Naive thymus-derived CD4-positive, alpha-beta T cell (primary cell): ENCODE measurements at regions of chr16 and their contacts with region 1.

Region 1: DNA sequence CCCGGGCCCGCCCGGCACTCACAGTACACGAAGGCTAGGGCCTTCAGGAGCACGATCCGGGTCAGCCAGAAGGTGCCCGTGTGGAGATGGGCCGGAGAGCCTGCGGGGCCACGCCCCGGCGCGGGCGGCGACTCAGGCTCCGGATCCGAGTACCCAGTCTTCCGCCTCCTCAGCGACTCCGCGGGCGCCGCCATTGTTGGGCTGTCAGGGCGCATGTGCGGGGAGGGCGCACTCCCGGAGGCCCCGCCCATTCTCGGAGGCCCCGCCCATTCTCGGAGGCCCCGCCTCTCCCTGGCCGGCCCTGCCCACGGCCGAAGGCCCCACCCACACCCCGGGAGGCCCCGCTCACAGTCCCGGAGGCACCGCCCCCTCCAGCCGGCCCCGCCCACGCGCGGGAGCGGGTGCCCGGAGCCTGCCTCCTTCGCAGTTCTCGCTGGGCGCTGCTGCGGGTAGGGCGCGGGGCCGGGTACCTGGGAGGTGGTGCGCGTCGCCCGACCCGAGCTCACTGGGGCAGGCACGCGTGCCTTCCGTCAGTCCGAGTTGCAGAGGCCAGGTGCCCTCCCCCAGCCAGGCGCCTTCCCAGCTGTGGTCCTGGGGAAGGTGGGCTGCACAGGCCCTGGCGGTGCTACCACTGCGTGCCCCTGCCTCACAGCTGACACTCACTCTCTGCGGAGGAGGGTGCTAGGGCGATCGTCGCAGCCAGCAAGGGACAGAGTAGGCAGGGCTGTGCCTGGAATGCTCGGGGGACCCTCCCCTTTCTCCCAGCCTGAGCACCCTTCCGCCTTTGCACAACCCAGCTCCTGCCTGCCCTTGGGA is at the start of gene LMF1:
- DNase-seq: peak; percentile 92 to 100 (median 96)
- ATAC-seq: peak; percentile 100
- H3K4me3 ChIP-seq: peak within 1 kb of the TSS; percentile 79
- H3K4me3 Mint-ChIP-seq: peak within 1 kb of the TSS; percentile 67 to 88 (median 76)
- H3K27ac ChIP-seq: peak within 1 kb of the TSS; percentile 82
- H3K27ac Mint-ChIP-seq: peak within 1 kb of the TSS in 8 of 9 donors; percentile 58 to 90 (median 78)
- H3K4me1 ChIP-seq: peaks cover 6 to 19% of the 10 kb centered on the region in 2 donors
- H3K4me1 Mint-ChIP-seq: peaks cover 12 to 40% (median 29%) of the 10 kb centered on the region in 7 donors
- H3K27me3 ChIP-seq: no peaks in the 10 kb centered on the region
- H3K27me3 Mint-ChIP-seq: peaks cover 0 to 7% (median 0%) of the 10 kb centered on the region in 5 donors
- total RNA-seq, gene LMF1: 25.9 to 63.1 (median 43.1) TPM

Region 2: DNA sequence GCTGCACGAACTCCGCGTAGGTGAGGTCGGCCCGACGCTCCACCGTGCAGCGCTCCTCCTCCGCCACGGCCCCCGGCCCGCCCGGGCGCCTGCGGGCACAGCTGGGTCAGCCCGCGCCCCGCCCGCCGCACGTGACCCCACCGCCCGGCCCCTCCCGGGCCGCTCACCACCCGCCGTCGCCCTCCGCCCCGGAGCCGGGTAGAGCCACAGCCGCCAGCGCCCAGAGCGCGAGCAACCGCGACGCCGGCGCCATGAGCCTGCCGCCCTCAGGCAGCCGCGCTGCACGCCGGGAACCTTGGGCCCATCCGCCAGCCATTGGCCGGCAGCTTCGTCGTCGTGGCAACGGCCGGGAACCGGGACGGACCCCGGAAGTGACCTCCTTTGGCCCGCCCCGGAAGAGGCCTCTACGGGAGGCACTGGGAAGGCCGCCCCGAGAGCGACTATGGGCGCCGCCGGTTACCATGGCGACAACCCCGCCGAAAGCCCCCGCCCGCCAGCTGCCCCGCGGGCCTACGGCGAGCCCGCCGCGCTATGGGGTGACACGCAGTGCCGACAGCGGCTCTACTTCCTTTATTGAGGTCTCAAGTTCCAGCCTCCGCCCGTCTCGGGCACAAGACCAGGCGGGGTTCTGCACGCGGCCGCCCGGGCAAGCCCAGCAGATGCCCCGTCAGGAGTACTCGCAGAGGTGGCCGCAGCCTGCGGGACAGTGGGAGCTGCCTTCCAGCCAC is 286.7 kb before region 1 on chr16 and contains the start of gene JMJD8:
- CTCF ChIA-PET with region 1: no interaction called
- POLR2A ChIA-PET with region 1: no interaction called
- intact Hi-C with region 1: loop called in 1 of 2 experiments (anchors 2 kb)
- DNase-seq: peak; percentile 88 to 97 (median 91)
- ATAC-seq: peak; percentile 75
- H3K4me3 ChIP-seq: peak within 1 kb of the TSS; percentile 52
- H3K4me3 Mint-ChIP-seq: peak within 1 kb of the TSS; percentile 58 to 87 (median 76)
- H3K27ac ChIP-seq: peak within 1 kb of the TSS; percentile 78
- H3K27ac Mint-ChIP-seq: peak within 1 kb of the TSS in 6 of 9 donors; percentile 38 to 82 (median 58)
- H3K4me1 ChIP-seq: peaks cover 9 to 36% of the 10 kb centered on the region in 2 donors
- H3K4me1 Mint-ChIP-seq: peaks cover 10 to 31% (median 22%) of the 10 kb centered on the region in 7 donors
- H3K27me3 ChIP-seq: no peaks in the 10 kb centered on the region
- H3K27me3 Mint-ChIP-seq: no peaks in the 10 kb centered on the region
- total RNA-seq, gene JMJD8: 26.8 to 48.1 (median 37.2) TPM

Region 3: GRCh38 chr16:728131-728889 is 242.7 kb before region 1 on chr16:
- CTCF ChIA-PET with region 1: no interaction called
- POLR2A ChIA-PET with region 1: no interaction called
- intact Hi-C with region 1: no loop called
- DNase-seq: peak in 7 of 9 donors; percentile 46 to 64 (median 55)
- ATAC-seq: peak; percentile 85
- H3K4me3 ChIP-seq: peak overlapping the region; percentile 39
- H3K4me3 Mint-ChIP-seq: peak overlapping the region in 5 of 10 donors; percentile 25 to 87 (median 42)
- H3K27ac ChIP-seq: peak overlapping the region; percentile 21
- H3K27ac Mint-ChIP-seq: no peak overlapping the region
- H3K4me1 ChIP-seq: peaks cover 0 to 12% of the 10 kb centered on the region in 2 donors
- H3K4me1 Mint-ChIP-seq: no peaks in the 10 kb centered on the region
- H3K27me3 ChIP-seq: no peaks in the 10 kb centered on the region
- H3K27me3 Mint-ChIP-seq: peaks cover 0 to 6% (median 0%) of the 10 kb centered on the region in 5 donors

Region 4: GRCh38 chr16:788394-789126 is 182.4 kb before region 1 on chr16 and contains the start of gene CHTF18:
- CTCF ChIA-PET with region 1: no interaction called
- POLR2A ChIA-PET with region 1: no interaction called
- intact Hi-C with region 1: loop called in 1 of 2 experiments (anchors 5 kb)
- DNase-seq: peak; percentile 90 to 95 (median 95)
- ATAC-seq: peak; percentile 98
- H3K4me3 ChIP-seq: peak within 1 kb of the TSS; percentile 74
- H3K4me3 Mint-ChIP-seq: peak within 1 kb of the TSS; percentile 78 to 90 (median 86)
- H3K27ac ChIP-seq: peak within 1 kb of the TSS; percentile 83
- H3K27ac Mint-ChIP-seq: peak within 1 kb of the TSS in 6 of 9 donors; percentile 53 to 89 (median 78)
- H3K4me1 ChIP-seq: peaks cover 5 to 8% of the 10 kb centered on the region in 2 donors
- H3K4me1 Mint-ChIP-seq: peaks cover 0 to 14% (median 5%) of the 10 kb centered on the region in 7 donors
- H3K27me3 ChIP-seq: no peaks in the 10 kb centered on the region
- H3K27me3 Mint-ChIP-seq: no peaks in the 10 kb centered on the region
- total RNA-seq, gene CHTF18: 32.0 to 74.8 (median 51.7) TPM

Region 5: GRCh38 chr16:982145-983043 is 11.4 kb after region 1 on chr16:
- CTCF ChIA-PET with region 1: interaction called, 3 read pairs
- POLR2A ChIA-PET with region 1: interaction called, 66 read pairs
- intact Hi-C with region 1: loop called (anchors 1 kb)
- DNase-seq: peak in 1 of 9 donors; percentile 37
- ATAC-seq: peak; percentile 16
- H3K4me3 ChIP-seq: no peak overlapping the region
- H3K4me3 Mint-ChIP-seq: peak overlapping the region; percentile 23 to 83 (median 66)
- H3K27ac ChIP-seq: no peak overlapping the region
- H3K27ac Mint-ChIP-seq: peak overlapping the region in 3 of 9 donors; percentile 10 to 25 (median 13)
- H3K4me1 ChIP-seq: peaks cover 0 to 5% of the 10 kb centered on the region in 2 donors
- H3K4me1 Mint-ChIP-seq: peaks cover 0 to 20% (median 13%) of the 10 kb centered on the region in 7 donors
- H3K27me3 ChIP-seq: no peaks in the 10 kb centered on the region
- H3K27me3 Mint-ChIP-seq: peaks cover 0 to 29% (median 0%) of the 10 kb centered on the region in 5 donors

Region 6: DNA sequence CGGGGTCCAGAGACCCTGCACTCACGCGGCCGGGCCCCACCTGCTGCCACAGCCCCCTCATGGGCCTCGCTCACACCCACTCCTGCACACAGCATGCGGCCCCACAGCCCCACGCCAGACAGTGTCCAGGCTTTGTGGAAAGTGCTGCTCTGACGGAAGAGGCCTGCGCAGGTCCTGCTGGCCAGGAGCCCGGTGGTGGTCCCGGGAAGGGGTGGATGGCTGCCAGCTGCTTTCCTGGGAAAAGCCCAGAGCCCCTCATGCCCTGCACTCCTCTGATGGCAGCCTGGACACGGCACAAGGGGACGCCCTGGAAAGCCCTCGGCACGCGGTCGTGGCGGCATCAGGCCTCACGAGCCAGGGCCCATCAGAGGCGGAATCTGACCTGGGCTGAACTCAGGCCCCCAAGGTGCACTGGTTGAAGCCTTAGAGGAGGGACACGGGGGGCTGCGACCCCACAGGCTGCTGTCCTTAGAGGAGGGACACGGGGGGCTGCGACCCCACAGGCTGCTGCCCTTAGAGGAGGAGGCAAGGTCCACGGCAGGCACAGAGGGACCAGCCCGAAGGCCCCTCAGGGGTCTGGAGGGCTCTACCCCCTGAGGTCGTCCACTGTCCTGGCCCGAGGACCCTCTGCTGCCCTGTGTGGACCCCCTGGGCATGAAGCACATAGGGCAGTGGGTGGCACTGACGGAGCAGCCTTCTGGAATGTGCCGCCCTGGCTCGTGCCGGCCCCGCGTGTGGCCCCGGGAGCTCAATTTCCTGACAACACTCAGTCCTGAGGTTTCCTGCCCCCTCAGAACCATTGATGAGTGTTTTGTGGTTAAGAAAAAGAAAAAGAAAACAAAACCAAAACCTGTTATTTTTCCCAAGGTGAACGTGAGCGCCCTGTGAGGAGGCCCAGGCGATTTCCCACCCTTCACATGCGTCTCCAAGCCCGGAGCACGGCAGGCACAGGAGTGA is 32.7 kb after region 1 on chr16:
- CTCF ChIA-PET with region 1: interaction called, 3 read pairs
- POLR2A ChIA-PET with region 1: interaction called, 5 read pairs
- intact Hi-C with region 1: loop called in 1 of 2 experiments (anchors 1 kb)
- DNase-seq: peak in 7 of 9 donors; percentile 50 to 69 (median 66)
- ATAC-seq: peak; percentile 76
- H3K4me3 ChIP-seq: peak overlapping the region; percentile 36
- H3K4me3 Mint-ChIP-seq: peak overlapping the region; percentile 74 to 90 (median 87)
- H3K27ac ChIP-seq: peak overlapping the region; percentile 68
- H3K27ac Mint-ChIP-seq: peak overlapping the region; percentile 73 to 98 (median 95)
- H3K4me1 ChIP-seq: peaks cover 25 to 37% of the 10 kb centered on the region in 2 donors
- H3K4me1 Mint-ChIP-seq: peaks cover 12 to 48% (median 28%) of the 10 kb centered on the region in 7 donors
- H3K27me3 ChIP-seq: no peaks in the 10 kb centered on the region
- H3K27me3 Mint-ChIP-seq: peaks cover 0 to 24% (median 0%) of the 10 kb centered on the region in 5 donors